CD8-positive, alpha-beta memory T cell (primary cell): ENCODE measurements at regions of chr11 and their contacts with region 1.

Region 1: DNA sequence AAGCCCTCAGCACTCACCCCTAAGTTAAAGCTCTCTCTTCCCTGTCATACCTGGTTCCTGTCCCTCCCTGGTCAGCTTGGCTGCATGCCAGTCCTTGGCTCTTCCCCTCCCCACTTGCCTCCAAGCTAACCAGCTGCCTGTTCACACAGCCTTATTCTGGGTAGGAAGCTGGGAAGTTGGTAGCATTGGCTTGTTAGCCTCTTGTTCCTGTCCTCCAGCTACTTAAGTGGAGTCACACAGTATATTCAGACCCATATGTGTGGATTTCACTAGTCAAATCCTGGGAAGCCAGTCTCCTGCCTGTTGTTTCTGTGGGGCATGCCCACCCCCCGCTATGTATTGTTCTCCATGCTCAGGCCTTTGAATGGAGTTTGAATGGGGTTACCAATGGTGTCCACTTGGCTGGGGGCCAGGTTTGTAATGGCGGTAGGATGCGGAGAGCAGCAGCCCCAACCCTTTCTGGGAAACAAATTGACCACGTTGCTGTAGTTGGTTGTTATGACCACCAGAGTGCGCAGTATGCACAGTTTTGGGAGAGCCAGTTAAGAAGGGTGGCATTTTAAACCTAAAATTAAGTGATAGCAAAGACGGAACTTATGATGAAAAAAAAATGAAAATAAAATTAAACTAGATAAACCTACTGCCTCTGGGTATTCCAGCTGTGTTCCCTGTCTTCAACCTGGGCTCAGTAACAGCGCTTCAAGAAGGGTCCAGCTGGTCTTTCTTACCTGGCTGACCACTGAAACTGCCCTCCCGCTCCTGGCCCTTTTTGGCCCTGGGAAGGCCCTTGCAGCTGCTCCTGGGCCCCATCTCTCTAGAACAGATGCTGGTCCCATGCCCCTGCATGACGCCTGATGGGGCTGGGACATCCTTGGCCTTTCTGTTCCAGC is 10.7 kb upstream of the RPS3 start:
- DNase-seq: peak; percentile 39 to 81 (median 61)
- H3K4me3 ChIP-seq: no peak overlapping the region
- H3K4me3 Mint-ChIP-seq: no peak overlapping the region
- H3K27ac ChIP-seq: no peak overlapping the region
- H3K27ac Mint-ChIP-seq: no peak overlapping the region
- H3K4me1 ChIP-seq: peaks cover 19% of the 10 kb centered on the region
- H3K4me1 Mint-ChIP-seq: peaks cover 9 to 10% (median 9%) of the 10 kb centered on the region in 3 donors
- H3K27me3 ChIP-seq: no peaks in the 10 kb centered on the region
- H3K27me3 Mint-ChIP-seq: peaks cover 3 to 4% of the 10 kb centered on the region in 2 donors

Region 2: DNA sequence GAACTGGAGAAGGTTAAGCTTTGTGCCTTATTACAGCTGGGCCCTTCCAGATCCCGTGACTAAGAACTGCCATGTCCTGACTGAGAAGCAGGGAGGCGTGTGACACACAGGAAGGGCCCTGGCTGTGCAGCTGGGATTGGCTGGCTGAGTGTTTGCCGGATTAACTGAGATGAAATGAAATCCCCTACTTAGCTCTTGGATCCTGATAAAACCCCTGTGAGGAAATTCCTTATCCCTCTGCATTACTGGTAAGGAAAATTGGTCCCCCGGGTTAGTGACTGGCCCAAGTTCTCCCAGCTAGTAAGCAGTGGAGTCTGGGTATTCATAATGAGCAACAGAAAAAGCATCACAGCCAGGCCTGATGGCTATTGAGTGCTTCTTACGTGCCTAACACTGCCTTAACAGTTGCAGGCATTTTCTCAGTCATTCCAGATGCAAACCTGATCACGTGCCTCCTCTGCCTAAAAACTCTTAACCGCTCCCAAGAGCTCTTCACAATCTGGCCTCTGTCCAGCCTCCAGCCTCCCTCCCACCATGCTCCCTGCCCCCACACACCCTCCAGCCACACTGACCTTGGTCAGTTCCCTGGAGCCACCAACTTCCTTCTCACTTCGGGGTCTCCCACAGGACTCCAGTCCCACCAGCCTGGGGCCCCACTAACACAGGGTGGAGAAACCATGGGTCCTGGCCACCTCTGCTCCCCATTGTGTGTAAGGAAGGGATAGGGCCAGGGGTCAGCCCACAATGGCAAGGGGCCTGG is 74.9 kb before region 1 on chr11:
- CTCF ChIA-PET with region 1: no interaction called
- POLR2A ChIA-PET with region 1: no interaction called
- DNase-seq: no peak
- H3K4me3 ChIP-seq: no peak overlapping the region
- H3K4me3 Mint-ChIP-seq: no peak overlapping the region
- H3K27ac ChIP-seq: peak overlapping the region; percentile 38
- H3K27ac Mint-ChIP-seq: peak overlapping the region in 1 of 8 donors; percentile 29
- H3K4me1 ChIP-seq: peaks cover 6% of the 10 kb centered on the region
- H3K4me1 Mint-ChIP-seq: peaks cover 0 to 14% (median 11%) of the 10 kb centered on the region in 3 donors
- H3K27me3 ChIP-seq: no peaks in the 10 kb centered on the region
- H3K27me3 Mint-ChIP-seq: no peaks in the 10 kb centered on the region

Region 3: DNA sequence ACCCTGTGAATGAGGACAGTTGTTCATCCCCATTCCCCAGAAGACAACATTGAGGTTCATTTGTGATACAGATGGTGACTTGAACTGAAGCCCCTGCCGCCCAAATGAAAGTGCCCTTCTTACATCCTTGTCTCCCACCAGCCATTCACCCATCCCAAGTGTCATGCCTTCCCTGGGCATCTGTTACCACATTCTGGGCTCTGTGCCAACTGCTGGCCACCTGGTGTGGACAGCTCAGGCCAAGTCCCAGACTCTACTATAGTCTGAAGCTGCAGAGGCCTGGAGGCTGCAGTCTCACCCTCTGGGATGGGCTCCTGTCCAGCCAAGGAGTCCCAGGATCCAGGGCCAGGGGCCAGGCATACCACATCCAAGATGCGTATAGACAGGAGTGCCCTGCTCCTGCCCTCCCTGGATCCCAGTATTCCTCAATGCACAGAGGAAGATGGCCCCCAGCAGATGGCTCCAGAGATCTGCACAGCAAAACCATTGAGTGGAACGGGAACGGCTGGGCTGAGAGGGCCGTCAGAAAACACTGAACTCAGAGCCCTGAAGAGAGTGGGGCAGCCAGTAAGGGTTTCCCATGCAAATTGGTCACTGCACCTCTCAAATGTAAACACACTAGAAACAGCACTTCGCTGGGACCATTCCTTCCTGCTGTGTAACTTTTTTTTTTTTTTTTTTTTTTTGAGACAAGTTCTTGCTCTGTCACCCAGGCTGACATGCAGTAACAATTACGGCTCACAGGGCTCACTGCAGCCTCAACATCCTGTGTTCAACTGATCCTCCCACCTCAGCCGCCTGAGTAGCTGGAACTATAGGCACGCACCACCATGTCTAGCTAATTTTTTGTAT is 60.0 kb before region 1 on chr11:
- CTCF ChIA-PET with region 1: interaction called, 41 read pairs
- POLR2A ChIA-PET with region 1: no interaction called
- DNase-seq: peak in 4 of 5 donors; percentile 10 to 72 (median 60)
- H3K4me3 ChIP-seq: peak overlapping the region; percentile 40
- H3K4me3 Mint-ChIP-seq: peak overlapping the region in 6 of 7 donors; percentile 41 to 66 (median 55)
- H3K27ac ChIP-seq: peak overlapping the region; percentile 52
- H3K27ac Mint-ChIP-seq: peak overlapping the region; percentile 59 to 86 (median 75)
- H3K4me1 ChIP-seq: peaks cover 43% of the 10 kb centered on the region
- H3K4me1 Mint-ChIP-seq: peaks cover 44 to 65% (median 57%) of the 10 kb centered on the region in 3 donors
- H3K27me3 ChIP-seq: no peaks in the 10 kb centered on the region
- H3K27me3 Mint-ChIP-seq: no peaks in the 10 kb centered on the region

Region 4: GRCh38 chr11:75399344-75400145 is 10.9 kb after region 1 on chr11 and contains the start of gene RPS3:
- CTCF ChIA-PET with region 1: interaction called, 17 read pairs
- POLR2A ChIA-PET with region 1: interaction called, 3 read pairs
- DNase-seq: peak; percentile 78 to 92 (median 85)
- H3K4me3 ChIP-seq: peak within 1 kb of the TSS; percentile 73
- H3K4me3 Mint-ChIP-seq: peak within 1 kb of the TSS; percentile 91 to 98 (median 95)
- H3K27ac ChIP-seq: peak within 1 kb of the TSS; percentile 88
- H3K27ac Mint-ChIP-seq: peak within 1 kb of the TSS; percentile 87 to 99 (median 96)
- H3K4me1 ChIP-seq: peaks cover 25% of the 10 kb centered on the region
- H3K4me1 Mint-ChIP-seq: peaks cover 48 to 53% (median 48%) of the 10 kb centered on the region in 3 donors
- H3K27me3 ChIP-seq: no peaks in the 10 kb centered on the region
- H3K27me3 Mint-ChIP-seq: no peaks in the 10 kb centered on the region
- total RNA-seq, gene RPS3: 3,916 to 3,935 TPM

Region 5: GRCh38 chr11:75445315-75445953 is 56.8 kb after region 1 on chr11:
- CTCF ChIA-PET with region 1: interaction called, 21 read pairs
- POLR2A ChIA-PET with region 1: no interaction called
- DNase-seq: peak; percentile 55 to 79 (median 65)
- H3K4me3 ChIP-seq: no peak overlapping the region
- H3K4me3 Mint-ChIP-seq: no peak overlapping the region
- H3K27ac ChIP-seq: no peak overlapping the region
- H3K27ac Mint-ChIP-seq: peak overlapping the region in 1 of 8 donors; percentile 54
- H3K4me1 ChIP-seq: no peaks in the 10 kb centered on the region
- H3K4me1 Mint-ChIP-seq: no peaks in the 10 kb centered on the region
- H3K27me3 ChIP-seq: no peaks in the 10 kb centered on the region
- H3K27me3 Mint-ChIP-seq: peaks cover 0 to 3% of the 10 kb centered on the region in 2 donors

Region 6: DNA sequence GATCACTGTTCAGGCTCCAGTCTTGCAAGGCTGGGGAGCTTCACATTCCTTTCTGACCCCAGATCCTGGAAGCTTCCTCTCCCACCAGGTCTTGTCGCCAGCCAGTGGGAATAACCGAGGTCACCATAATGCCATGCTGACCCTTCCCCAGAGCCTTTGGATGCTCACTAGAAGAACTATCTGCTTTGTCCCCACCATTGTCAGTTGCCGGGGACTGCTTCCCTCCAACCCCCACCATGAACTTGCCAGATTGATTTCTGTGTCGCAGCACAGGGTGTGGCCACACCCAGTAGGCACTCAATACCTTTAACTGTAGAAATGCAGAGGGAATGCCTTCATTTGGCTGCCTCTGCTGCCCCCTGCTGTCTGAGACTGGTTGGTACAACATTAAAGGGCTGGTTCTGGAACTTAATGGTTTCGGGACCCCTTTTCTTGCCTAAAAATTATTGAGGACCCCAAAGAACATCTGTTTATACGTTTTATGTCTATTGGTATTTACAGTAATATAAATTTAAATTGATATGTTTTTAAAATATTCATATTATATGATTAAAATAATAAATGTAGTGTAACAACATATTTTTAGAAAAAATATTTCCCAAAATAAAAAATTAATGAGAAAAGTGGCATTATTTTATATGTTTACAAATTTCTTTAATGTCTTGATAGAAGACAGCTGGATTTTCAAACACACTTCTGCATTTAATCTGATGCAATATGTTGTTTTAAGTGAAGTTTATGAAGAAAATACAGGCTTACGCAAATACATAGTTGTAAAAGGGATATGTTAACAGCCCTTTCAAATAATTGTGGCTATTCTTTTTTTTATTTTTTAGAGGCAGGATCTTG is 143.8 kb after region 1 on chr11:
- CTCF ChIA-PET with region 1: interaction called, 53 read pairs
- POLR2A ChIA-PET with region 1: interaction called, 6 read pairs
- DNase-seq: peak; percentile 71 to 86 (median 75)
- H3K4me3 ChIP-seq: no peak overlapping the region
- H3K4me3 Mint-ChIP-seq: peak overlapping the region in 1 of 7 donors; percentile 25
- H3K27ac ChIP-seq: no peak overlapping the region
- H3K27ac Mint-ChIP-seq: peak overlapping the region in 6 of 8 donors; percentile 3 to 74 (median 38)
- H3K4me1 ChIP-seq: peaks cover 14% of the 10 kb centered on the region
- H3K4me1 Mint-ChIP-seq: peaks cover 22 to 34% (median 32%) of the 10 kb centered on the region in 3 donors
- H3K27me3 ChIP-seq: no peaks in the 10 kb centered on the region
- H3K27me3 Mint-ChIP-seq: peaks cover 0 to 1% of the 10 kb centered on the region in 2 donors